IMR-90 (cell line): ENCODE measurements at regions of chr2 and their contacts with region 1.

Region 1: DNA sequence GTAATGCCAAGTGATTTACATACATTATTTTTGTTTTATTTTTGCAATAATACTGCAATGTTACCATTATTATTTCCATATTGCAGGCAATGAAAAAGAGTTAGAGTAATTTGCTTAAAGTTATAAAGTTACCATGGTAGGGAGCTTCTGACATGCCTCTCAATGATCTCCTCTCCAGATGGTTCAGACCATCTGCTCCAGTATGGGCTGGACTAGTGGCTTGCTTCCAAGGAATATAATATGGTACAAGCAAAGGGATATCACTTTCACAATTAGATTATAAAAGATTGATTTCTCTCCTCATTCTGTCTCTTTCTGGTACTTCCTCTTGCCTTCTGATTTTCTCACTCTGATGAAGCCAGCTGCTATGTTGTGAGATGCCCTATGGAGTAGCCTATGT is 245.4 kb downstream of the INSIG2 start:
- DNase-seq: no peak
- ATAC-seq: no peak
- H3K4me3 ChIP-seq: no peak overlapping the region
- H3K27ac ChIP-seq: no peak overlapping the region
- H3K4me1 ChIP-seq: no peaks in the 10 kb centered on the region
- H3K27me3 ChIP-seq: no peaks in the 10 kb centered on the region
- CTCF ChIP-seq: no peak
- POLR2A ChIP-seq: no peak
- RAD21 ChIP-seq: no peak

Region 2: GRCh38 chr2:118348380-118349034 is 14.8 kb after region 1 on chr2:
- CTCF ChIA-PET with region 1: interaction called, 3 read pairs
- POLR2A ChIA-PET with region 1: no interaction called
- dilution Hi-C with region 1: no loop called
- in situ Hi-C with region 1: no loop called
- intact Hi-C with region 1: loop called (anchors 1 kb)
- DNase-seq: no peak
- ATAC-seq: no peak
- H3K4me3 ChIP-seq: no peak overlapping the region
- H3K27ac ChIP-seq: no peak overlapping the region
- H3K4me1 ChIP-seq: no peaks in the 10 kb centered on the region
- H3K27me3 ChIP-seq: no peaks in the 10 kb centered on the region
- CTCF ChIP-seq: no peak
- POLR2A ChIP-seq: no peak
- RAD21 ChIP-seq: no peak